HEK293 (cell line): ENCODE measurements at regions of chr7 and their contacts with region 1.

Region 1: DNA sequence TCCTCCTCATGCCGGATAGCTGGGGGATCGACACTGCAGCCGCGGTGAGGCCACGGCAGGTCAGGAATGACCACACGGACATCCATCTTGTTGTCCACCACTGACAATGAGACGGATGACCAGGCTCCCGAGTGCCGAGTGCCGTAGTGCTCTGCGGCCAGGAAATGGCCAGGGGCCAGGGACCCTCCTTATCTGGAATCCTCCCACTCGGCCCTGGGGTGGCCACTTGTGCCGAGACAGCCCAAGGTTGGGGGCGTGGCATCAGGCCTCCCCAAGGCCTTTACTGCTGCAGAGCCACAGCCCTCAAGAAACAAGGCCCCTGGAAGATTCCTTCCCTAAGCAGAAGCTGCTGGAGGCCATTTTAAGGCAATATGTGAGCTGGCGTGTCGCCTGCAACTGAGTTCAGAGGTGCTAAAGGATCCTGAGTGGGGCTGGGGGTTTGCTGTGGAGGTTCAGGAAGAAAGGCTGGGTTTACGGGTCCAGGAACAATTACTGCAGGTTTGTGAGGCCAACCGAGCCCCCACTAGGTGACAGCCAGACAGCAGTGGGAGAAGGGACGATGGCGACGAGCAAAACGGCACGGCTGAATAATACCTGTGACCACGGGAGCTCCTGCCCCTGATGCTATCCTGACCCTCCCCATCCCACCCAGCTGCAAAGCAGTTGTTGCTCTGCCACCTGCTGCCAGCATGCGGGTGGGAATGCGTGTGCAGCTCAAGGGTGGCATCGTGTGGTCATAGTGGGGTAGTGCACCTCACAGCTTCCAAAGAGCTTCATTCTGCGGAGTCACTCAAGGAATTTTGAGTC is 31.6 kb upstream of the LEP start:
- H3K4me3 ChIP-seq: no peak overlapping the region
- H3K27ac ChIP-seq: no peak overlapping the region
- H3K4me1 ChIP-seq: no peaks in the 10 kb centered on the region
- CTCF ChIP-seq: peak; percentile 99

Region 2: GRCh38 chr7:128031901-128032604 is 177.4 kb before region 1 on chr7:
- CTCF ChIA-PET with region 1: interaction called, 69 read pairs
- POLR2A ChIA-PET with region 1: no interaction called
- H3K4me3 ChIP-seq: peak overlapping the region; percentile 45
- H3K27ac ChIP-seq: no peak overlapping the region; the same call in 1 of the 2 replicates
- H3K4me1 ChIP-seq: no peaks in the 10 kb centered on the region; the same call in none of the 2 replicates
- CTCF ChIP-seq: peak; percentile 55; the same call in 1 of the 2 replicates

Region 3: DNA sequence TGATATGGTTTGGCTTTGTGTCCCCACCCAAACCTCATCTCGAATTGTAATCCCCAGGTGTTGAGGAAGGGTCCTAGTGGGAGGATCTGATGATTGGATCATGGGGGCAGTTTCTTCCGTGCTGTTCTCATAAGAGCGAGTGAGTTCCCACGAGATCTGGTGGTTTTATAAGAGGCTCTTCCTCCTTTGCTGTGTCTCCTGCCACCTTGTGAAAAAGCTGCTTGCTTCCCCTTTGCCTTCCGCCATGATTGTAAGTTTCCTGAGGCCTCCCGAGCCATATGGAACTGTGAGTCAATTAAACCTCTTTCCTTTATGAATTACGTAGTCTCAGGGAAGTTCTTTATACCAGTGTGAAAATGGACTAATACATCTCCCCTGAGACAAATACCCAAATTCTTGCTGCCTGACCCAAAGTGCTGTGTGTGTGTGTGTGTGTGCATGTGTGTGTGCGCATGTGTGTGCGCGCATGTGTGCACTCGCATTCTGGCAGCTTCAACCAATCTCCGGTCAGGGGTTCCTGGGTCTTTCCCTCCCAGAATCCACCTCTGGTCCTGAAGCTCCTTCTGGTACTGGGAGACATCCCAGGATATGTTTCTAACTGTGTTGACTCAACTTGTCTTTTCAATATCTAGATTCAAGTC is 80.1 kb before region 1 on chr7:
- CTCF ChIA-PET with region 1: interaction called, 115 read pairs
- POLR2A ChIA-PET with region 1: no interaction called
- H3K4me3 ChIP-seq: no peak overlapping the region
- H3K27ac ChIP-seq: no peak overlapping the region
- H3K4me1 ChIP-seq: no peaks in the 10 kb centered on the region
- CTCF ChIP-seq: no peak

Region 4: GRCh38 chr7:128171342-128171918 is 38.0 kb before region 1 on chr7:
- CTCF ChIA-PET with region 1: interaction called, 13 read pairs
- POLR2A ChIA-PET with region 1: no interaction called
- H3K4me3 ChIP-seq: no peak overlapping the region
- H3K27ac ChIP-seq: no peak overlapping the region
- H3K4me1 ChIP-seq: peaks cover 3% of the 10 kb centered on the region; the same call in 1 of the 2 replicates
- CTCF ChIP-seq: no peak